Panc1 (cell line): ENCODE measurements at regions of chr9 and their contacts with region 1.

Region 1: GRCh38 chr9:122016744-122017143 is 76.4 kb downstream of the TTLL11 start:
- DNase-seq: no peak
- ATAC-seq: no peak
- H3K4me3 ChIP-seq: no peak overlapping the region
- H3K27ac ChIP-seq: no peak overlapping the region
- H3K4me1 ChIP-seq: no peaks in the 10 kb centered on the region
- H3K27me3 ChIP-seq: no peaks in the 10 kb centered on the region
- CTCF ChIP-seq: peak; percentile 50

Region 2: GRCh38 chr9:121744002-121744686 is 272.6 kb before region 1 on chr9:
- CTCF ChIA-PET with region 1: no interaction called
- POLR2A ChIA-PET with region 1: interaction called, 12 read pairs
- in situ Hi-C with region 1: no loop called
- intact Hi-C with region 1: no loop called
- DNase-seq: no peak
- ATAC-seq: peak; percentile 82
- H3K4me3 ChIP-seq: peak overlapping the region; percentile 44 to 53
- H3K27ac ChIP-seq: peak overlapping the region; percentile 70
- H3K4me1 ChIP-seq: peaks cover 22% of the 10 kb centered on the region
- H3K27me3 ChIP-seq: no peaks in the 10 kb centered on the region
- CTCF ChIP-seq: peak; percentile 80

Region 3: GRCh38 chr9:122126331-122127261 is 109.9 kb after region 1 on chr9:
- CTCF ChIA-PET with region 1: no interaction called
- POLR2A ChIA-PET with region 1: no interaction called
- in situ Hi-C with region 1: no loop called
- intact Hi-C with region 1: no loop called
- DNase-seq: no peak
- ATAC-seq: no peak
- H3K4me3 ChIP-seq: peak overlapping the region; percentile 15 to 29
- H3K27ac ChIP-seq: no peak overlapping the region
- H3K4me1 ChIP-seq: no peaks in the 10 kb centered on the region; the same call in 1 of the 2 replicates
- H3K27me3 ChIP-seq: no peaks in the 10 kb centered on the region
- CTCF ChIP-seq: no peak